Common myeloid progenitor, CD34-positive (primary cell): ENCODE measurements at regions of chr17 and their contacts with region 1.

Region 1: GRCh38 chr17:48724251-48725003 is 1.4 kb downstream of the PRAC2 start:
- DNase-seq: peak; percentile 80 to 89 (median 86)
- H3K4me3 ChIP-seq: no peak overlapping the region
- H3K27ac ChIP-seq: no peak overlapping the region
- H3K4me1 ChIP-seq: peaks cover 0 to 22% (median 8%) of the 10 kb centered on the region in 4 experiments
- H3K27me3 ChIP-seq: peaks cover 18 to 100% (median 79%) of the 10 kb centered on the region in 5 experiments

Region 2: GRCh38 chr17:48738803-48739526 is 14.5 kb after region 1 on chr17:
- CTCF ChIA-PET with region 1: interaction called, 92 read pairs
- POLR2A ChIA-PET with region 1: no interaction called
- DNase-seq: peak in 1 of 3 donors; percentile 36
- H3K4me3 ChIP-seq: no peak overlapping the region
- H3K27ac ChIP-seq: no peak overlapping the region
- H3K4me1 ChIP-seq: no peaks in the 10 kb centered on the region
- H3K27me3 ChIP-seq: peaks cover 41 to 100% (median 65%) of the 10 kb centered on the region in 5 experiments

Region 3: DNA sequence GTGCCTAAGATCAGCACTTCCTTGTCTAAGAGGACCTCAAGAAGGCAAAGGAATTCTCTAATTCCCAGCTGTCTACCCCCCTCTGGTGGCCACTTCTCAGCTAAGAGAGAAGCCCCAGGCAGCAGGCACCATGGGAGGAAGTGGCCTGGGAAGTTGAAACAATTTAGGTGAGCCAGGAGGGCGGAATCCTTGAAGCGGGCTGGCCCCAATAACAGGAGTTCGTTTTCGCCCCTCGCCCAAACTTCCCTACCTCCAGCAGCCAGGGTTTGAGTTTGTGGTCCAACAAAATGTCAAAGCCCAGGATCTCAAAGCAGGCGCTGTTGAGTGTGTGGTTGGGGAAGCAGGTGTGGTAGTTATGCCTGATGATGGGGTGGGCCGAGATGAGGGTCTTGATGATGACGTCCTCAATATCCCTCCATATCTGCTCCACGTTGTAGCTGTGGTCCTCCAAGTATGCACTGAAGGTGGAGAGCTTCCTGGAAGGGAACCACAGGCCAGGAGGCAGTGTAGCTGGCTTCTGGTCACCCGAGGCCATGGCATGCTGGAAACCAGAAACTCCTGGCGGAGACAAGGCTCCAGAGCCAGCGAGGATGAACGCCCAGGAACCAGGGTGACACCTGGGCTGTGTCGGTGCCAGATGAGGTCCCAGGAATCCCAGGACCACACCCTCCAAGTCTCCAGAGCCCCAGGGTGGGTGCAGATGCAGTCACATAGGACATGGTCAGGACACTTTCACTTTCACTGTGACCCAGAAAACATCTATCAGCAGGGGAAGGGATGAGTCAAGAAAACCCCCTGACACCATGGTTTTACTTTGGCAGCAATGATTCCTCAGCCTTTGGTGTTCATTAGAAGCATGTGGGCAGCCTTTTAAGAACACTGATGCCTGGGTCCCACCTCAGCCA is 67.0 kb after region 1 on chr17:
- CTCF ChIA-PET with region 1: interaction called, 130 read pairs
- POLR2A ChIA-PET with region 1: no interaction called
- DNase-seq: peak; percentile 60 to 66 (median 65)
- H3K4me3 ChIP-seq: no peak overlapping the region
- H3K27ac ChIP-seq: no peak overlapping the region
- H3K4me1 ChIP-seq: peaks cover 0 to 11% (median 1%) of the 10 kb centered on the region in 4 experiments
- H3K27me3 ChIP-seq: peaks cover 0 to 68% (median 22%) of the 10 kb centered on the region in 5 experiments

Region 4: GRCh38 chr17:48816774-48817590 is 92.6 kb after region 1 on chr17 and contains the start of gene TTLL6:
- CTCF ChIA-PET with region 1: interaction called, 13 read pairs
- POLR2A ChIA-PET with region 1: no interaction called
- DNase-seq: peak; percentile 84 to 93 (median 93)
- H3K4me3 ChIP-seq: peak within 1 kb of the TSS in 6 of 7 experiments; percentile 11 to 73 (median 58)
- H3K27ac ChIP-seq: no peak within 1 kb of the TSS
- H3K4me1 ChIP-seq: peaks cover 0 to 16% (median 12%) of the 10 kb centered on the region in 4 experiments
- H3K27me3 ChIP-seq: peaks cover 0 to 34% (median 20%) of the 10 kb centered on the region in 5 experiments